Activated CD4-positive, alpha-beta T cell treated with anti-CD3 and anti-CD28 coated beads, Interleukin-2, amount 10 ng/mL, durations not matched to agents 24 days and 14 days (primary cell): ENCODE measurements at regions of chr11 and their contacts with region 1.

Region 1: GRCh38 chr11:17230867-17231851 is 23.4 kb upstream of the PIK3C2A start:
- DNase-seq: peak; percentile 85
- H3K4me3 Mint-ChIP-seq: peak overlapping the region; percentile 34
- H3K27ac Mint-ChIP-seq: peak overlapping the region; percentile 59
- H3K4me1 Mint-ChIP-seq: peaks cover 13% of the 10 kb centered on the region
- H3K27me3 Mint-ChIP-seq: peaks cover 30% of the 10 kb centered on the region

Region 2: DNA sequence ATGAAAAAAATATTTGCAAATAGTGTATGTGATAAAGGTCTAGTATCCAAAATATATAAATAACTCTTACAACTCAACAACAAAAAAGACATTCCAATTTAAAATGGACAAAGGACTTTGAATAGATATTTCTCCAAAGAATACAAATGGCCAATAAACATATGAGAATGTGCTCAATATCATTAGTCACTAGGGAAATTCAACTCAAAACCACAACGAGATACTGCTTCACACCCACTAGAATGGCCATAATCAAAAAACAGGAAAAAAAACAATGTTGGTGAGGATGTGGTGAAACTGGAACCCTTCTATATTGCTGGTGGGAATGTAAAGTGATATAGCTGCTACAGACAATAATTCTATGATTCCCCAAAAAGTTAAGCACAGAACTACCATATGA is 115.0 kb before region 1 on chr11:
- intact Hi-C with region 1: no loop called
- DNase-seq: no peak
- H3K4me3 Mint-ChIP-seq: no peak overlapping the region
- H3K27ac Mint-ChIP-seq: no peak overlapping the region
- H3K4me1 Mint-ChIP-seq: peaks cover 4% of the 10 kb centered on the region
- H3K27me3 Mint-ChIP-seq: no peaks in the 10 kb centered on the region

Region 3: GRCh38 chr11:17197431-17197898 is 33.7 kb before region 1 on chr11:
- intact Hi-C with region 1: no loop called
- DNase-seq: no peak
- H3K4me3 Mint-ChIP-seq: no peak overlapping the region
- H3K27ac Mint-ChIP-seq: no peak overlapping the region
- H3K4me1 Mint-ChIP-seq: peaks cover 2% of the 10 kb centered on the region
- H3K27me3 Mint-ChIP-seq: no peaks in the 10 kb centered on the region

Region 4: GRCh38 chr11:17244046-17244445 is 12.9 kb after region 1 on chr11:
- intact Hi-C with region 1: loop called (anchors 1 kb)
- DNase-seq: no peak
- H3K4me3 Mint-ChIP-seq: no peak overlapping the region
- H3K27ac Mint-ChIP-seq: no peak overlapping the region
- H3K4me1 Mint-ChIP-seq: peaks cover 5% of the 10 kb centered on the region
- H3K27me3 Mint-ChIP-seq: peaks cover 51% of the 10 kb centered on the region

Region 5: DNA sequence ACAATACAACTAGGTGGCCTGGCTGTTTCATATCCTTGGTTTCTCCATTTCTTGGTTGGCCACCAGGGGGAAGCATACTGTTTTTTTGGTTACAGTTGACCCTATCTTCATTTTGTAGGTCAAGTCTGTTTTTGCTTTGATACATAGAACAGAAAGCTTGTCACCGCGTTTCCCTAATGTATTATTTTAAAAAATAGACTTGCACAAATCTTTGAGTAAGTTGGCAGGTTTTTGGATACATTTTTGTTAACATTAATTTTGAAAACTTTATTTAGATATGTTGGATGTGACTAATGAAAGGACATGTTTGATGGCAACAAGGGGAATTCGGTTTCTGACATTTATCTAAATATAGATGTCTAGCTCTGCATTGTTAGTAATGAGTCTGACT is 123.4 kb after region 1 on chr11:
- intact Hi-C with region 1: loop called (anchors 1 kb)
- DNase-seq: peak; percentile 90
- H3K4me3 Mint-ChIP-seq: peak overlapping the region; percentile 93
- H3K27ac Mint-ChIP-seq: peak overlapping the region; percentile 16
- H3K4me1 Mint-ChIP-seq: peaks cover 29% of the 10 kb centered on the region
- H3K27me3 Mint-ChIP-seq: peaks cover 34% of the 10 kb centered on the region

Region 6: GRCh38 chr11:17384002-17384511 is 152.9 kb after region 1 on chr11:
- intact Hi-C with region 1: loop called (anchors 1 kb)
- DNase-seq: peak; percentile 92
- H3K4me3 Mint-ChIP-seq: no peak overlapping the region
- H3K27ac Mint-ChIP-seq: no peak overlapping the region
- H3K4me1 Mint-ChIP-seq: peaks cover 3% of the 10 kb centered on the region
- H3K27me3 Mint-ChIP-seq: peaks cover 11% of the 10 kb centered on the region

Region 7: GRCh38 chr11:17528181-17528691 is 297.1 kb after region 1 on chr11:
- intact Hi-C with region 1: loop called (anchors 1 kb)
- DNase-seq: peak; percentile 82
- H3K4me3 Mint-ChIP-seq: no peak overlapping the region
- H3K27ac Mint-ChIP-seq: no peak overlapping the region
- H3K4me1 Mint-ChIP-seq: no peaks in the 10 kb centered on the region
- H3K27me3 Mint-ChIP-seq: peaks cover 11% of the 10 kb centered on the region